ENCODE measurements at regions of chr16 and their contacts with region 1.

Region 1: DNA sequence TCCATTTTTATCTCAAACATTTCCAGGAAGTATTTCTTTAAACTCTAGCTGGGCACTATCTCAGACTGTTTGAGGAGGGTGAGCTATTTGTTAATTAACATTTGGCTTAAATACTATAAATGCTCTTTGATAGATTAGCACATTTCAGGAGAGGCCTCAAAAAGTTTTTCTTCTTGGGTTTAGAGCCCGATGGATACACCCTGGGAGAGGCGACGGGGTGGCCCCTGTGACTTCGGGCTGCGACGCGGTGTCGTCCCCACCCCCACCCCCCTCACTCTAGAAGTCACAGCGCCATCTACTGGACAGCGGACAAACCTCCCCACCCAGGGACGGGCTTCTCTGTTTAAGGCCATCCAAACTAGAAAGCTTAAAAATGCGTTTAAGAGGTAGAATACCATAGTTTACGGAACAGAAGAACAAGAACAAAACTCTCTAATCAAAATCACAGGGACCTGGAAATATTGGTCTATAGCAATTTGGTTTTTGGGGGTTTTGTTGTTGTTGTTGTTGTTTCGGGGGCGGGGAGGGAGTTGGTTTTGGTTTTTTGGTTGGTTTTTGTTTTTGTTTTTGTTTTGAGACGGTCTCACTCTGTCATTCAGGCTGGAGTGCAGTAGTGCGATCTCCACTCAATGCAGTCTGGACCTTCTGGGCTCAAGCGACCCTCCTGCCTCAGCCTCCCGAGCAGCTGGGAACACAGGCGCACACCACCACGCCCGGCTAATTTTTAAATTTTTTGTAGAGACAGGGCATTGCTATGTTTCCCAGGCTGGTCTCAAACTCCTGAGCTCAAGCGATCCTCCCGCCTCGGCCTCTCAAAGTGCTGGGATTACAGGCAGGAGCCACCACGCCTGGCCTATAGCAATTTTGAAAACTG is 254.4 kb downstream of the C16orf95 start:
- DNase-seq: no peak
- H3K4me3 ChIP-seq: peak overlapping the region; percentile 34
- CTCF ChIP-seq: peak; percentile 81

Region 2: DNA sequence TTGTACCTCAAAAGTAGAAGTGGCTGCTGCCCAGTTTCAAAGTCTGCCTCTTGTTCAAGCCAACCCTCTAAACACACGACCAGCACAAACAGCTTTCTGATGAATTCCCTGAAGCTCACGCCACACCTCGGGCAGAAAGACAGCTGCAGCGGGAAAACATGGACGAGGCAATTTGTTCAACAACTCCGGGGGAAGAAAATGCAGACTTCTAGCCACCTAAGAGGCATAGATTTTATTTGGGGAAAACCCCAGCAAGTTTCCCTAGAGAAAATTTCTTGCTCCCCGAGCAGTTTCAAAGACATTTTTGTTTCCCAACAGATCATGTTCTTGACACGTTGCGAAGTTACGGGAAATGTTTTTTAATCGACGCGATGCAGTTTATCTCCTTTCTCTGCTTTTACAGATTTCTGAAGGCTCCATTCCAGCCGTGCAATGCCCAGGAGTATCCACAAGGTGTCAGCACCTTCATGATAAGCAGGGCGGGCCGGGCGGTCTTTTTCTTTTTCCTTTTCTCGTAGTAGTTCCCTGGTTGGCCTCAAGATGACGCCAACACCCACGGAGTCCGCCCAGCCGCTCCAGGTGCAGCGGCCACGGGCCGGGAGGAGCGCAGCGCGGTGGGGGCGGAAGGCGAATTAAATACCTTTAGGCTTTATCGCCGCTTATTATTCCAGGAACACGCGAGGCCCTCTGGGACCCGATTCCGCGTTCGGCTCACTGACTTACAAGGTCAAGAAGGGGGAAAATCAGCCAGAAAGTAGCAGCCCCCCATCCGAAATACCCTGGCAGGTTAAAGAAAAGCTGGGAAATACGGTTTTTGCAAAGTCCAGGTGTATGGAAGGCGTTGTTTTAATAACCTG is 499.1 kb before region 1 on chr16:
- CTCF ChIA-PET with region 1: interaction called, 309 read pairs
- POLR2A ChIA-PET with region 1: interaction called, 5 read pairs
- DNase-seq: no peak
- H3K4me3 ChIP-seq: peak overlapping the region; percentile 57
- CTCF ChIP-seq: peak; percentile 86

Region 3: DNA sequence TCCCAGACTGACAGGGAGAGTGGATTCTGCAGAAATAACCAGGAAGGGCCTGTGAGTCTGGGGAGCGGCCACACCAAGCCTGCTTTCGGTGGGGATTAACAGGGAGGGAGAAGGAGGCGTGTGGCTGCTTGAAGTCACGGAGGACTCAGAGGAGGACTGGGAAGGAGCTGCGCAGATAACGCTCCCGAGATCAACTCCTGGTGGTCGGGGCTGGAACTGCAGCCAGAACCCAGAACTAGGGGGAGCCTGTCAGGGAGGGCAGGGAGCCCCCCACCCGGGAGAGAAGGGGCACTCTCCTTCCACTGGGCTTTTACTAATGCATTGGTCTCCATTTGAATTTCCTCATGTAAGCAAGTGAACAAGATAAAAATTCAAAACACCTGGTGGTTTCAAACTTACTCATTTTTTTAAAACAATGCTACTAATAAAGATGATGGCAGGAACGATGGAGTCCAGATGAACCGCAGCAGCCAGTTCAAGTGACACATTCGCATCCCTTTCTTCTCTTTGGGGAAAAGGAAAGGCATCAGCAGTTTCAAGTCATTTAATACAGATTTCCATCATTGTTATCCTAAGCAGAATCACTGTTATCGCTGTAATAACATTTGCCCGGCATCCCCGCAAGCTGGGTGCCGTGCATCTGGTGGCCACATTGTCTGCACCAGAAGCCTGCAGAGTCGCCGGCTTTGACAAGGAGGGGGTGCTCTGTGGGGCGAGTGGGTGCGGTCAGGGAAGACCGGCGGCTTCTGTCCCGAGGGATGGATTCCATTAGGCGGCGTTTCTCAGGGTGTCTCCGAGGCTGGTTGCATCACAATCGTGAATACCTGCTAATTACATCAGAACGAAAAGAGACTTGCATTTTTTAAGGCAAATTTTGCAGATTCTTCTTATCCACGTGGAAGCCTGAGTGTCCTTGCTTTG is 301.4 kb before region 1 on chr16:
- CTCF ChIA-PET with region 1: interaction called, 18 read pairs
- POLR2A ChIA-PET with region 1: no interaction called
- DNase-seq: no peak
- H3K4me3 ChIP-seq: peak overlapping the region; percentile 47
- CTCF ChIP-seq: peak; percentile 89

Region 4: GRCh38 chr16:86882586-86883280 is 180.1 kb before region 1 on chr16:
- CTCF ChIA-PET with region 1: interaction called, 10 read pairs
- POLR2A ChIA-PET with region 1: no interaction called
- DNase-seq: no peak
- H3K4me3 ChIP-seq: no peak overlapping the region
- CTCF ChIP-seq: no peak

Region 5: GRCh38 chr16:87076950-87077749 is 14.3 kb after region 1 on chr16:
- CTCF ChIA-PET with region 1: interaction called, 36 read pairs
- POLR2A ChIA-PET with region 1: no interaction called
- DNase-seq: no peak
- H3K4me3 ChIP-seq: no peak overlapping the region
- CTCF ChIP-seq: peak; percentile 75

Region 6: DNA sequence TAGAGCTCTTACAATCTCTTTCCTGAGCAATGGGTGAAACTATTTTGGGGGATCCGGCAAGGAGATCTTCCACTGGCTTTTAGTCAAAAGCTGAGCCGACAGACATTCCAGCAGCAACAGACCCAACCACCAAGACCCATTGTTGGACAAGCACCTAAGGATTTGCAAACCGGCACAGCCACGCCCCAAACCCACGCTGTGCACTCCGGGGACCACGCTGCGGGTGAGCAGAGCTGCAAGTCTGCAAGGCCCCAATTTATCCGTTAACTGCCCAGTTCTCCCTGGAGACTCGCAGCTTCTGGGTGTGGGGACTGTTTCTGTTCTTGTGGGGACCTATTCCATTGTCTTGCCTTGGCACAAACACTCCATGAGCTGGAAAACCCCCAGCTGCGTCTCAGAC is 208.4 kb after region 1 on chr16:
- CTCF ChIA-PET with region 1: interaction called, 69 read pairs
- POLR2A ChIA-PET with region 1: no interaction called
- DNase-seq: no peak
- H3K4me3 ChIP-seq: no peak overlapping the region
- CTCF ChIP-seq: no peak

Measured in AG04449 (cell line).